ENCODE measurements at regions of chr2 and their contacts with region 1.

Region 1: GRCh38 chr2:1546023-1546591 is 132.8 kb downstream of the TPO start:
- DNase-seq: no peak
- H3K4me3 Mint-ChIP-seq: no peak overlapping the region
- H3K27ac Mint-ChIP-seq: no peak overlapping the region
- H3K4me1 Mint-ChIP-seq: peaks cover 10% of the 10 kb centered on the region
- H3K27me3 Mint-ChIP-seq: no peaks in the 10 kb centered on the region

Region 2: DNA sequence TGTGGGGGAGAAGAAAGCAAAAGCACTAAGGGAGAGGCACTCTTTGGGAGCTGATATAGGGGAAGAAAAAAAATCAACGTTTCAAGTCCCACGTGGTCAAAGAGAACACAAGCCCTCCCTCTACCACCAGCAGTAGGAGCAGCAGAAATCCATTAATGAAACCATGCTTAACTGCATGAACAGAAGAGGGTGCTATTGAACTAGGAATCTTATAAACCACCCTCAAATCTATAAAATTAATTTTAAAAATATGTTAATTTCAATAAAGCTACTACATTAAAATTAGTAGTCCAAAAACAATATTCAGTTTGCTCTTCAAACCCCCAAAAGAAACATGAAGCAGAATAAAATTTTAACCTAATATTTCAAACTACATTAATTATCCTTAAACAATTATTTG is 1016.7 kb before region 1 on chr2:
- intact Hi-C with region 1: loop called (anchors 2 kb)
- DNase-seq: no peak
- H3K4me3 Mint-ChIP-seq: no peak overlapping the region
- H3K27ac Mint-ChIP-seq: no peak overlapping the region
- H3K4me1 Mint-ChIP-seq: no peaks in the 10 kb centered on the region
- H3K27me3 Mint-ChIP-seq: no peaks in the 10 kb centered on the region

Region 3: DNA sequence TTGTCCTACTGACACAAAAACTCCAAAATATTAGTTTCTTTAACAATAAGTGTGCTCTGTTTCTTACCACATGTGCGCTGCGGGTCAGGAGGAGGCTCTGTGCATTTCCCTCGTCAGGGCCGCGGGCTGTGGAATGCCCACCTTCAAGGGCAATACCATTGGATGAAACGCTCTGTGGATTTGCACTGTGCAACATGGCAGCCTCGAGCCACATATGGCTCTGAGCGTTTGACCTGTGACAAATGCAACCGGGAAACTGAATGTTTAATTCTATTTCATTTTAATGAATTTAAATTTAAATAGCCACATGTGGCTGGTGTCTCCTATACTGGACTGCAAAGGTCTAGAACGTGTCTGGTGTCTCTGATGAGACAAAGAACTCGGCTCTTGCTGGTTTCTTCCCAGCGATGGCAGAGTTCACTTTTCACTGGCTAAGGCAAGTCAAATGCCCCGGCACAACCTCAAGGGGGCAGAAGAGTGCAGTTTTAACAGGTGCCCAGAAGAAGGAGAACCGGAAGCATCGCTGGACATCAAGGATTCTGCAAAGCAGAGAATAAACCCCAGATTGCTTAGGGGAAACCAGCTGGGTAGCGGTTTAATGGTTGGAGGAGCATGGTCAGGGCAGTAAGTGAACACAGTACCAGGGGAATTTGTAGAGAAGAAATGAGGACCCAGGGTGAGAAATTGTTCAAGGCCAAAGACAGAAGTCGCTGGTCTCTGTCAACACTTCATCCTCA is 831.9 kb before region 1 on chr2:
- intact Hi-C with region 1: loop called (anchors 1 kb)
- DNase-seq: peak; percentile 12
- H3K4me3 Mint-ChIP-seq: no peak overlapping the region
- H3K27ac Mint-ChIP-seq: no peak overlapping the region
- H3K4me1 Mint-ChIP-seq: no peaks in the 10 kb centered on the region
- H3K27me3 Mint-ChIP-seq: peaks cover 11% of the 10 kb centered on the region

Measured in activated T-helper 1 cell treated with anti-CD3 and anti-CD28 coated beads, Interleukin-12 subunit alpha, Interleukin-12 subunit beta, Interleukin-2, Interleukin-4 antibody, amounts not matched to agents 30 ng/mL and 10 ng/mL and 1 ng/mL, durations not matched to agents 14 hours and 24 hours and 36 hours (primary cell).